ENCODE measurements at regions of chr18 and their contacts with region 1.

Region 1: GRCh38 chr18:58781627-58782194 is 83.0 kb upstream of the ZNF532 start:
- DNase-seq: peak; percentile 57
- ATAC-seq: peak; percentile 99
- H3K4me3 ChIP-seq: no peak overlapping the region
- H3K27ac ChIP-seq: no peak overlapping the region
- H3K4me1 ChIP-seq: no peaks in the 10 kb centered on the region
- H3K27me3 ChIP-seq: no peaks in the 10 kb centered on the region
- CTCF ChIP-seq: peak; percentile 80 to 91 (median 83)
- EP300 ChIP-seq: no peak
- POLR2A ChIP-seq: no peak
- RAD21 ChIP-seq: peak; percentile 93

Region 2: DNA sequence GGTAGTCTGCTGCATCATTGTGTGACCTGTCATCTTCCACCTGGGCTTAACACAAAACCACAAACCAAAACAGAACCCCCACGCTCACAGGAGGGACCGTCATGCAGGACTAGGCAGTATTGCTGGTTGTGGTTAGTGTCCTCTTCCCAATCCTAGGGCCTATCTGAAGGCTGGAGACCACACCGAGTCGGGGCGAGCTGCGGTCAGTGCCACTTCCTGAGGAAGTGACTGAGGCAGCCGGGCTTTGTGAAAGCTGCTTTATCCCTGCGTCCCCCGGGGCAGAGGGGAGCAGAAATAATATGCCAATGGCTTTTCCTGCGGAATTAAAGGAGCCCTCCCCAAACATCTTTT is 105.9 kb after region 1 on chr18:
- CTCF ChIA-PET with region 1: no interaction called
- POLR2A ChIA-PET with region 1: no interaction called
- RAD21 ChIA-PET with region 1: interaction called, 4 read pairs
- SMC1A ChIA-PET with region 1: no interaction called
- in situ Hi-C with region 1: no loop called
- intact Hi-C with region 1: loop called (anchors 10 kb)
- DNase-seq: peak; percentile 51
- ATAC-seq: peak; percentile 81
- H3K4me3 ChIP-seq: no peak overlapping the region
- H3K27ac ChIP-seq: no peak overlapping the region
- H3K4me1 ChIP-seq: peaks cover 8% of the 10 kb centered on the region
- H3K27me3 ChIP-seq: no peaks in the 10 kb centered on the region
- CTCF ChIP-seq: no peak
- EP300 ChIP-seq: 0 out of 4 replicates have a peak, but pooled peaks of 1 of the 2 experiments have one; percentile 32
- POLR2A ChIP-seq: no peak
- RAD21 ChIP-seq: no peak

Region 3: GRCh38 chr18:59005262-59005661 is 223.6 kb after region 1 on chr18:
- CTCF ChIA-PET with region 1: no interaction called
- POLR2A ChIA-PET with region 1: no interaction called
- RAD21 ChIA-PET with region 1: no interaction called
- SMC1A ChIA-PET with region 1: no interaction called
- in situ Hi-C with region 1: no loop called
- intact Hi-C with region 1: no loop called
- DNase-seq: no peak
- ATAC-seq: no peak
- H3K4me3 ChIP-seq: no peak overlapping the region
- H3K27ac ChIP-seq: no peak overlapping the region
- H3K4me1 ChIP-seq: no peaks in the 10 kb centered on the region
- H3K27me3 ChIP-seq: no peaks in the 10 kb centered on the region
- CTCF ChIP-seq: no peak
- EP300 ChIP-seq: no peak
- POLR2A ChIP-seq: no peak
- RAD21 ChIP-seq: no peak

Region 4: GRCh38 chr18:59056706-59057492 is 275.2 kb after region 1 on chr18:
- CTCF ChIA-PET with region 1: interaction called, 118 read pairs
- POLR2A ChIA-PET with region 1: interaction called, 3 read pairs
- RAD21 ChIA-PET with region 1: interaction called, 20 read pairs
- SMC1A ChIA-PET with region 1: interaction called, 34 read pairs
- in situ Hi-C with region 1: loop called (anchors 5 kb)
- intact Hi-C with region 1: loop called (anchors 1 kb)
- DNase-seq: no peak
- ATAC-seq: peak; percentile 98
- H3K4me3 ChIP-seq: no peak overlapping the region
- H3K27ac ChIP-seq: no peak overlapping the region
- H3K4me1 ChIP-seq: no peaks in the 10 kb centered on the region; the same call in 1 of the 2 replicates
- H3K27me3 ChIP-seq: no peaks in the 10 kb centered on the region; a peak in 1 of 4 replicates
- CTCF ChIP-seq: peak; percentile 81 to 92 (median 91)
- EP300 ChIP-seq: no peak
- POLR2A ChIP-seq: no peak
- RAD21 ChIP-seq: peak; percentile 96

Measured in GM12878 (cell line).